ENCODE measurements at regions of chr4 and their contacts with region 1.

Region 1: DNA sequence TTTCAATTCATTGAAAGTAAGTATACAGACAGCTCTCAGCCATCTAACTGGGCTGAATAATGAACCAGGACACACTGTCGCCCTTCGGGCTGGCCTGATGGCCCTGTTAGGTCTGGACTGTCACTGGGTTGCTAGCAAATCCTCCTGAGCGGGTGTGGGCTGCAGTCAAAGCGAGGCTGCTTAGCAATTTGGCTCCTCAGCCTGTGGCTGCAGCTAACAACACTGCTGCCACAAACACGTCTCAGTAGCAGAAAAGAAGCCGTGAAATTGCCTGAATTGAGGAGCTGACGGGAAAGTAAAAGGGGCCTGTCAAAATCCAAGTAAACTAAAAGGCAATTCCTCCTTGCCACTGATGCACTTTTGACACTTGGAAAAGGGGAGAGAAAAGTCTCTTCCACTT is 72.8 kb downstream of the SMIM20 start:
- DNase-seq: no peak
- ATAC-seq: no peak
- H3K4me3 ChIP-seq: no peak overlapping the region
- H3K27ac ChIP-seq: no peak overlapping the region
- H3K4me1 ChIP-seq: peaks cover 5% of the 10 kb centered on the region
- H3K27me3 ChIP-seq: no peaks in the 10 kb centered on the region
- CTCF ChIP-seq: no peak
- EP300 ChIP-seq: no peak
- POLR2A ChIP-seq: no peak
- RAD21 ChIP-seq: no peak

Region 2: GRCh38 chr4:25925486-25926201 is 61.2 kb before region 1 on chr4:
- CTCF ChIA-PET with region 1: interaction called, 62 read pairs
- POLR2A ChIA-PET with region 1: no interaction called
- RAD21 ChIA-PET with region 1: no interaction called
- SMC1A ChIA-PET with region 1: interaction called, 12 read pairs
- in situ Hi-C with region 1: no loop called
- intact Hi-C with region 1: loop called (anchors 1 kb)
- DNase-seq: no peak
- ATAC-seq: peak; percentile 94
- H3K4me3 ChIP-seq: no peak overlapping the region
- H3K27ac ChIP-seq: no peak overlapping the region
- H3K4me1 ChIP-seq: no peaks in the 10 kb centered on the region
- H3K27me3 ChIP-seq: no peaks in the 10 kb centered on the region
- CTCF ChIP-seq: peak; percentile 65 to 71 (median 69)
- EP300 ChIP-seq: no peak
- POLR2A ChIP-seq: no peak
- RAD21 ChIP-seq: peak; percentile 89

Region 3: GRCh38 chr4:25970226-25970675 is 16.6 kb before region 1 on chr4:
- CTCF ChIA-PET with region 1: interaction called, 10 read pairs
- POLR2A ChIA-PET with region 1: interaction called, 4 read pairs
- RAD21 ChIA-PET with region 1: interaction called, 8 read pairs
- SMC1A ChIA-PET with region 1: interaction called, 4 read pairs
- in situ Hi-C with region 1: no loop called
- intact Hi-C with region 1: no loop called
- DNase-seq: no peak
- ATAC-seq: peak; percentile 81
- H3K4me3 ChIP-seq: no peak overlapping the region
- H3K27ac ChIP-seq: no peak overlapping the region
- H3K4me1 ChIP-seq: peaks cover 14% of the 10 kb centered on the region
- H3K27me3 ChIP-seq: no peaks in the 10 kb centered on the region
- CTCF ChIP-seq: no peak
- EP300 ChIP-seq: no peak
- POLR2A ChIP-seq: no peak
- RAD21 ChIP-seq: no peak

Region 4: DNA sequence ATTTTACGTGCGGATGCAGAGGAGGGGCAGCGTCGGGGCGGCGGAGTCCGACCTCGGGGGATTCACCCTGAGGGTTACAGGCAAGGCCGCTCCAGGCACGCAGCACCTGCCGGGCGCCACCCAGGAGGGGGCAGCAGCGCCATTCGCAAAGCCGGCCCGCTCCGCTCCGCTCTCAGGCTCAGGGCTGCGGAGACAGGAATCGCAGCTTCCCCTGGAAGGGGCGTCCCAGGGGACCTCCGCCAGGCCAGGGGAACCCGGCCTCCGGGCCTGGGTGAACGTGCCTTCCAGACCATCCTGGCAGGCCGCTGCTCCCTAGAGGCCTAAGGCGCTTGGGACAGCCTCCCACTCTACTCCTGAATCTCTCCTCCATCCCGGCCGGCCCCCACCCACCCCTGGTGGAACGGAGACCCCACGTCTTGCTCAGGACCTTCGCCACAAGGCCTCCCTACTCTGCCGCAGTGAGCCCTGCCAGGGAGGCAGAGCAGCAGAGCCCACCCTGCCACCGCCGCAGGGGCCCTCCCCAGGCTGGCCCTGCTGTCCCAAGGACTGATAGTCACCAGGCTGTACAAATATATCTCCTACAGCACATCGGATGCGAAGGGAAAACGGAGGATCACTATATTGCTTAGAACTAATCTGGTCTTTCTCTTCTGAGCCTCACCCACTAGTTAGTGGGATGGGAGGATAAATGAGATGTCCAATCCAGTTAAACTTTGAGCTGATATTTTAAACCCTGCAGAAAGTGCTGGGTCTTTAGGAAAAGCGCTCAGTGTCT is 42.2 kb after region 1 on chr4:
- CTCF ChIA-PET with region 1: interaction called, 7 read pairs
- POLR2A ChIA-PET with region 1: no interaction called
- RAD21 ChIA-PET with region 1: interaction called, 4 read pairs
- SMC1A ChIA-PET with region 1: interaction called, 13 read pairs
- in situ Hi-C with region 1: no loop called
- intact Hi-C with region 1: no loop called
- DNase-seq: no peak
- ATAC-seq: peak; percentile 99
- H3K4me3 ChIP-seq: no peak overlapping the region
- H3K27ac ChIP-seq: no peak overlapping the region
- H3K4me1 ChIP-seq: peaks cover 4% of the 10 kb centered on the region
- H3K27me3 ChIP-seq: no peaks in the 10 kb centered on the region
- CTCF ChIP-seq: peak; percentile 75 to 89 (median 85)
- EP300 ChIP-seq: no peak
- POLR2A ChIP-seq: no peak
- RAD21 ChIP-seq: peak; percentile 93

Measured in GM12878 (cell line).